Gastrocnemius medialis (tissue), 4 donors: ENCODE measurements at regions of chr9 and their contacts with region 1.

Region 1: DNA sequence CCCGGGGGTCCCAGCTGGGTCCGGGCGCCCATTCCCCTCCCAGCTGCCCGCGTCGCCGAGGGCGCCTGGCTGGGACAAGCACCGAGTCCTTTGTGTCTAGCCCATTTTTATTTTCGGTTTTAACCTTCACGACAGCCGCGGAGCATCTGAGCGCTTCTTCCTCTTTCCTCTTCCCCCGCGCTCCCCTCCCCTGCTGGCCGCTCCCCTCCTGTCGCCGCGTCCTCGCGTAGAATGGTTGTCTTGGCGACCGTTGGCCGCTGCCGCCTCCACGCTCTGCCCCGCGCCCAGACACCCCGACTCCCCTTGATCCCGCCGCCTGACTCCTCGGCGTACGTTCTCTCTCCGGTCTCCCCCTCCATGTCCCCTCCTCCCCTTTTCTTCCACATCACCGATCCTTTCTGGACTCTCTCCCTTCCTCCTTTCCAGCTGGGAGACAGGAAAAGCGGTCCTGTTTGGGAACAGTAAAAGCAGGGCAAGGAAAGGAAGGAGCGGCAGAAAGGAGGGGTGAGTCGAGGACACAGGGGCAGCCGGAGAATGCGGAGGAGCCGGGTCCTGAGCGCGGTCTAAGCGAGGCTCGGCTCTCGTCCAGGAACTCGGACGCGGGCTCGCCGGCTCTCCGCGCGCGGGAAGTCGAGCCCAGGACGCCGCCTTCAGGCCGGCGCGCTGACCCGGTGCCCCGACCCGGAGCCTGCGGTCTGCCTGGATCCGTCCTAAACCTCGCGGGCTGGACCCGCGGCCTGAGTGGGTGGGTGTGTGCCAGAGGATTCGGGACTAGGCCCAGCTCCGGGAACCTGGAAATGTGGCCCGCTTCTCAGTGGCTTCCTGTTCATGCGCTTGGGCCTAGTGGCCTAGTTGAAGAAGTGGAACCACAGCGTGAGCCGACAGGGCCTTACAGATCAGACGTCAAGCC is 841 bp downstream of the CDKN2B-AS1 start:
- DNase-seq: peak in 1 of 2 donors; percentile 45
- ATAC-seq: peak; percentile 62 to 74
- H3K4me3 ChIP-seq: peak overlapping the region; percentile 76 to 95 (median 82)
- H3K27ac ChIP-seq: peak overlapping the region; percentile 44 to 60 (median 50)
- H3K4me1 ChIP-seq: peaks cover 4 to 5% of the 10 kb centered on the region in 2 donors
- H3K27me3 ChIP-seq: peaks cover 6 to 28% (median 25%) of the 10 kb centered on the region in 3 donors
- CTCF ChIP-seq: peak in 1 of 5 experiments; percentile 16
- POLR2A ChIP-seq: no peak

Region 2: DNA sequence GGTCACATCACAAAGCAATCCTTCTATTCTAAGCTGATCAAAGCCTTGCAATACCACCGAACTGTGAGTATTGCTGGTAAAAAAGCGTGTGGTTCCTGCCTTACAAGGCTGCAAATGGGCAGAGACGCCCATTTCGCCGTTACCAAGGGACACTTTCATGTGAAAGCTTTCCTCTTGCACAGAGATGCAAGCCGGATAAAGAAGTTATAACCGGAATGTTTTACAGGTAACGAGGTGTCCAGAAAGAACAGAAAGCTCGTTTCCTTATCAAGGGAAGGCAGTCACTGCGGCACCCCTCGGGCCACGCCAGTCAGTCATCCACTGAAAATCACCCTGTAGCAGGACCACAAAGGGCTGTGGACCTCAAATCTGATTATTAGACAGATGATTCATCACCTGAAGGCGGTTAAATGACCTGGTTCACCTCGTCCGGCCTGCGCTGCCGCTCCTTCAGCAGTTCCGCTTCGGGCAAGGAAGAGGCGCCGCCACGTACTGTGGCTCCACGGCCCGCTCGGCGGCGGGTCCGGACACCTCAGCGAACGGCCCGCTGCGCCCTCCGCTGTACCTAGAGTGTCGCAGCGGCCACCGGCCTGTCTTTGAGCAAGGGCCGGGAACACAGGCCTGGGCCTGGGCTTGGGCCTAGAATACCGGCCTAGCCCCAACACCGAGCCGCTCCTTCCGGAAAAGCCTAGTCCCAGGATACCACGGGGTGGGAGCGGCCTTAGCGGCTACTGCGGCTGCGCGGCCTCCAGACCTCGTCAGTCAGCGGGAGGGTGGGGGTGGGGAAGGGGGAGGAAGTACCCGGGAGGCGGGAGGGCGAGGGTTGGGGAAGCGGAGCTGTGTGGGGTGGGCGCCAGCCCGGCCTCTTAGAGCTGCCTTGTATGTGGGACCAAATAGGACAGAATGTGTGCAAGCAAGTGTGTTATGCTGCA is 660.5 kb before region 1 on chr9 and contains the start of gene KLHL9:
- in situ Hi-C with region 1: loop called in 2 of 4 experiments (anchors 25 kb)
- intact Hi-C with region 1: no loop called
- DNase-seq: peak; percentile 84 to 87
- ATAC-seq: peak; percentile 97
- H3K4me3 ChIP-seq: peak within 1 kb of the TSS; percentile 68 to 96 (median 90)
- H3K27ac ChIP-seq: peak within 1 kb of the TSS; percentile 87 to 93 (median 92)
- H3K4me1 ChIP-seq: peaks cover 43 to 44% of the 10 kb centered on the region in 2 donors
- H3K27me3 ChIP-seq: no peaks in the 10 kb centered on the region
- CTCF ChIP-seq: peak in 1 of 5 experiments; percentile 13
- POLR2A ChIP-seq: peak in 1 of 2 donors; percentile 59
- total RNA-seq, gene KLHL9: 5.2 to 8.2 (median 6.5) TPM

Region 3: DNA sequence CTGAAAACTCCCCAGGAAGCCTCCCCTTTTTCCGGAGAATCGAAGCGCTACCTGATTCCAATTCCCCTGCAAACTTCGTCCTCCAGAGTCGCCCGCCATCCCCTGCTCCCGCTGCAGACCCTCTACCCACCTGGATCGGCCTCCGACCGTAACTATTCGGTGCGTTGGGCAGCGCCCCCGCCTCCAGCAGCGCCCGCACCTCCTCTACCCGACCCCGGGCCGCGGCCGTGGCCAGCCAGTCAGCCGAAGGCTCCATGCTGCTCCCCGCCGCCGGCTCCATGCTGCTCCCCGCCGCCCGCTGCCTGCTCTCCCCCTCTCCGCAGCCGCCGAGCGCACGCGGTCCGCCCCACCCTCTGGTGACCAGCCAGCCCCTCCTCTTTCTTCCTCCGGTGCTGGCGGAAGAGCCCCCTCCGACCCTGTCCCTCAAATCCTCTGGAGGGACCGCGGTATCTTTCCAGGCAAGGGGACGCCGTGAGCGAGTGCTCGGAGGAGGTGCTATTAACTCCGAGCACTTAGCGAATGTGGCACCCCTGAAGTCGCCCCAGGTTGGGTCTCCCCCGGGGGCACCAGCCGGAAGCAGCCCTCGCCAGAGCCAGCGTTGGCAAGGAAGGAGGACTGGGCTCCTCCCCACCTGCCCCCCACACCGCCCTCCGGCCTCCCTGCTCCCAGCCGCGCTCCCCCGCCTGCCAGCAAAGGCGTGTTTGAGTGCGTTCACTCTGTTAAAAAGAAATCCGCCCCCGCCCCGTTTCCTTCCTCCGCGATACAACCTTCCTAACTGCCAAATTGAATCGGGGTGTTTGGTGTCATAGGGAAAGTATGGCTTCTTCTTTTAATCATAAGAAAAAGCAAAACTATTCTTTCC is 20.7 kb before region 1 on chr9:
- in situ Hi-C with region 1: no loop called
- intact Hi-C with region 1: loop called (anchors 2 kb)
- DNase-seq: no peak
- ATAC-seq: peak; percentile 52 to 53
- H3K4me3 ChIP-seq: peak overlapping the region; percentile 49 to 69 (median 54)
- H3K27ac ChIP-seq: no peak overlapping the region
- H3K4me1 ChIP-seq: peaks cover 13% of the 10 kb centered on the region in 2 donors
- H3K27me3 ChIP-seq: peaks cover 93 to 100% (median 98%) of the 10 kb centered on the region in 3 donors
- CTCF ChIP-seq: no peak
- POLR2A ChIP-seq: no peak

Region 4: DNA sequence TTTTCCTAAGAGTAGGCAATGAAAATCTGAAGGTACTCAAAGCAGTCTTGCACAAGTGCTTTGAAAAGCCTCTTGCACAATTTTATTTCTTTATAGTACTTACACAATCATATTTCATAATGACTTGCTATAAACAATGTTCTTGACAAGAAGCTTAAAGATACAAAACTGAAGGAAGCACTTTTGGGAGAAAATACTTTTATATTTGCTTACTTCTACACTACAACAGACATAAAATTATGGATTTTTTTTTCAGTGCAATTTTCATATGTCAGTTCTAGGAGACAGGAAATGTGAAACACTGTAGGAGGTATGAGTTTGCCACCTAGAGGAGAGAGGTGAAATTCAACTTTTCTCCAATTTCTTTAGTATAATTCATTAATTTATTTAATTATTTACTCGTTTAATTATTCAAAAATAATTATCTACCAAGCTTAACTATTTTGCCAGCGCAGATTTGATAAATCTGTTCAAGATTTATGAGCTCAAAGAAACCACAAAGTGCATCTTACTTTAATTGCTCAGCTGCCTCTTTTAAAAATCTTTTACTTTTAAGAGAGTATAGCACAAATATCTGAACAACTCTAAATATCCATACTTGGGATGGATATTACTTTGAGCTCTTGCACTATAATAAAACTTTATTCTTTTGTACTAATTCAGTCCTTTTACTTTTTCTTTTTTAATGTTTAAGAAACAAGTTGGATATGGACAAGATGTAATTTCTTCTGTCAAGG is 42.7 kb after region 1 on chr9:
- in situ Hi-C with region 1: no loop called
- intact Hi-C with region 1: loop called (anchors 1 kb)
- DNase-seq: no peak
- ATAC-seq: peak; percentile 77 to 91
- H3K4me3 ChIP-seq: no peak overlapping the region
- H3K27ac ChIP-seq: peak overlapping the region; percentile 77 to 82 (median 80)
- H3K4me1 ChIP-seq: peaks cover 32 to 50% of the 10 kb centered on the region in 2 donors
- H3K27me3 ChIP-seq: no peaks in the 10 kb centered on the region
- CTCF ChIP-seq: peak in 4 of 5 experiments; percentile 29 to 58 (median 54)
- POLR2A ChIP-seq: no peak